SK-N-SH (cell line): ENCODE measurements at regions of chr18 and their contacts with region 1.

Region 1: GRCh38 chr18:623761-624620 is 27.2 kb downstream of the CLUL1 start:
- DNase-seq: peak; percentile 59
- H3K4me3 ChIP-seq: no peak overlapping the region; a peak in 1 of 4 replicates
- H3K27ac ChIP-seq: no peak overlapping the region
- H3K4me1 ChIP-seq: no peaks in the 10 kb centered on the region; a peak in 1 of 4 replicates
- H3K27me3 ChIP-seq: peaks cover 25% of the 10 kb centered on the region; the same call in 1 of the 2 replicates
- CTCF ChIP-seq: peak; percentile 67
- EP300 ChIP-seq: no peak
- RAD21 ChIP-seq: peak; percentile 72

Region 2: GRCh38 chr18:267688-268552 is 356.1 kb before region 1 on chr18 and contains the start of gene THOC1:
- CTCF ChIA-PET with region 1: interaction called, 10 read pairs
- POLR2A ChIA-PET with region 1: no interaction called
- DNase-seq: peak; percentile 90
- H3K4me3 ChIP-seq: peak within 1 kb of the TSS; percentile 81 to 97
- H3K27ac ChIP-seq: peak within 1 kb of the TSS; percentile 78 to 92
- H3K4me1 ChIP-seq: peaks cover 0 to 12% of the 10 kb centered on the region in 2 experiments; a peak in 2 of 4 replicates
- H3K27me3 ChIP-seq: no peaks in the 10 kb centered on the region
- CTCF ChIP-seq: no peak
- EP300 ChIP-seq: peak; percentile 23 to 36; a peak in 2 of 4 replicates
- RAD21 ChIP-seq: no peak
- polyA plus RNA-seq, gene THOC1: 12.3 and 14.4 TPM in 2 replicates

Region 3: GRCh38 chr18:389658-390357 is 234.2 kb before region 1 on chr18:
- CTCF ChIA-PET with region 1: no interaction called
- POLR2A ChIA-PET with region 1: no interaction called
- DNase-seq: no peak
- H3K4me3 ChIP-seq: no peak overlapping the region
- H3K27ac ChIP-seq: no peak overlapping the region
- H3K4me1 ChIP-seq: peaks cover 7 to 36% of the 10 kb centered on the region in 2 experiments; a peak in 3 of 4 replicates
- H3K27me3 ChIP-seq: no peaks in the 10 kb centered on the region
- CTCF ChIP-seq: peak; percentile 40
- EP300 ChIP-seq: no peak
- RAD21 ChIP-seq: no peak

Region 4: DNA sequence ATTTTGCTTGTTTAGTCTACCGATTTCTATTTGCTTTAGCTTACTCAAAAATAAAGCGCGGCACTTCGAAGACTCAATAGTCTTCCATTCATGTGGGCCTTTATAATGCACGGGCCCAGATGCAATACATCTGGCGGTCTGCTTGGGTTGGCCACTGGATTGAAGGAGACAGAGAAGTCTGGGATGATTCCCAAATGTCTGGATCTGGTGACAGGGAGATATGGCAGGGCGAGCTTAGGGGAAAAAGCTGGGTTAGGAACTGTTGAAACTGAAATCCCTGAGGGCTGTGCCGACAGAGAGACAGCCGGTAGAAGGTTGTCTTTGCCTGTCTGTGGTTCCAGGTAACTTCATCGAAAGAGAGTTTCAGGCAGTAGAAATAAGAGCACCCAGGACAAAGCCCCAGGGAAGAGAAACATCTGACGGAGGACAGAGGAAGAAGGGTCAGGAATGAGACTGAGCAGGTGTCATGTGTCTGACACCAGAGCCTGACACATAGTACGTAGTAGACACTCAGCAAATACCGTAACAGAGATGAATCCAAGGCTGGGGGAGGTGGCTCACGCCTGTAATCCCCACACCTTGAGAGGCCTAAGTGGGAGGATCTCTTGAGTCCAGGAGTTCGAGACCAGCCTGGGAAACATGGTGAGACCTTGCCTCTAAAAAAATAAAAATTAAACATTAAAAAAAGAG is 13.6 kb before region 1 on chr18:
- CTCF ChIA-PET with region 1: interaction called, 25 read pairs
- POLR2A ChIA-PET with region 1: no interaction called
- DNase-seq: no peak
- H3K4me3 ChIP-seq: no peak overlapping the region
- H3K27ac ChIP-seq: no peak overlapping the region
- H3K4me1 ChIP-seq: no peaks in the 10 kb centered on the region
- H3K27me3 ChIP-seq: no peaks in the 10 kb centered on the region; the same call in 1 of the 2 replicates
- CTCF ChIP-seq: no peak
- EP300 ChIP-seq: no peak
- RAD21 ChIP-seq: no peak

Region 5: DNA sequence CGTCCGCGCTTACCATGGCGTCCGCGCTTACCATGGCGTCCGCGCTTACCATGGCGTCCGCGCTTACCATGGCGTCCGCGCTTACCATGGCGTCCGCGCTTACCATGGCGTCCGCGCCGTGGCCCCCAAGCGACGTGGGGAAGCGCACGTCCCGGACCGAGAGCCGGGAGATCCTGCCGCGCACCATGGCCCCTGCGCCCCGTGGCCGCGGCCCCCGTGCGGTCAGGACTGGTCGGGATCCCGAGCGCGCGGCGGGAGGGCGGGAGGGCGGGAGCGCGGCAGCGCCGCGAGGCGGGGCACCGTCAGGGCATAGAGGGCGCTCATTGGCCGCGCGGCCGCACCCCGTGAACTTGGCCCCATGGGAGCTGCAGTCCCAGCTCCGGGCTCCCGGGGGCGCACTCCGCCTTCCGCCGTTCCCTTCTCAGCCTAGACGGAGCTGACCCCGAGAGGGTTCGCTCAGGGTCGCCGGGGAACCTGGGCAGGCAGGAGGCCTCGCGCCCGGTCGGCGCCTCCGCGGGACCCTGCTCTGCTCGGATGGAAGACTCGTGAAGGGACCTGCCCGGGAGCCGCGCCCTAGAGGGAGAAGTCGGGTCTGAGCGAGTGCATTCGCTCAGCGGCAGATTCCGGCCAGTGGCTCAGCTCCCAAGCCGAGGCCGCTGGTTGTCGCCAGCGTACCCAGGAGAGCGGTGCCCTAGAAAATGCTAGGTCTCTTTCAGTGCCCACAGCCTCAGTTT is 88.6 kb after region 1 on chr18 and contains the start of gene ENOSF1:
- CTCF ChIA-PET with region 1: interaction called, 12 read pairs
- POLR2A ChIA-PET with region 1: no interaction called
- DNase-seq: peak; percentile 92
- H3K4me3 ChIP-seq: peak within 1 kb of the TSS; percentile 67 to 68
- H3K27ac ChIP-seq: peak within 1 kb of the TSS in 1 of 2 experiments; percentile 47; a peak in 1 of 4 replicates
- H3K4me1 ChIP-seq: peaks cover 0 to 7% of the 10 kb centered on the region in 2 experiments; a peak in 1 of 4 replicates
- H3K27me3 ChIP-seq: no peaks in the 10 kb centered on the region
- CTCF ChIP-seq: peak; percentile 55
- EP300 ChIP-seq: no peak
- RAD21 ChIP-seq: no peak; the same call in 1 of the 2 replicates
- polyA plus RNA-seq, gene ENOSF1: 23.3 and 25.9 TPM in 2 replicates

Region 6: DNA sequence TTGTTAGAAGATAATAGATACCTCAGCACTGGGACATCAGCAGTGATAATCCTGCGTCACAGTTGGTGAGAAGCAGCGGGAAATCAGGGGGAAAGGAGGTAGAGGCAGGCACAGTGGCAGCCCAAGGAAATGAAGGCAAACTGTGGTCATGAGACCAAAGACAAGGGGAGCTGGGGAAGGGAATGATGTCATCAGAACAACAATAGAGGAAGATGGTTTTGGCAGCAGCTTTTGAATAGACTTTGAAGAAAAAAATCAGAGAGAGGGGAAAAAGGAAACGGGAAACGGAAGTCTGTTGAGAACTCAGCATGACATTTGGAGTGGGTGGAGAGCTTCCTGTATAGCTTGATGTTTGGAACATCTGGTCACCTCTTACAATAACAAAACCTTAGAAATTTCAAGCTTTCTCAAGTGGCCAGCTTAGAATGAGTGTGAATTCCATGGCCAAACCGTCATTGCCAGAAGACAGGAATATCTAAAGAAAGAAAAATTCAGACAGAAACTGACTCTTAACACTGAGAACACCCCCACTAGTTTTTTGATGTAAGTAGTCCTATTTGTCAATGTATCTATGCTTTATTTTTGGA is 206.4 kb after region 1 on chr18:
- CTCF ChIA-PET with region 1: interaction called, 149 read pairs
- POLR2A ChIA-PET with region 1: interaction called, 3 read pairs
- DNase-seq: no peak
- H3K4me3 ChIP-seq: no peak overlapping the region
- H3K27ac ChIP-seq: no peak overlapping the region
- H3K4me1 ChIP-seq: peaks cover 3 to 4% of the 10 kb centered on the region in 2 experiments; a peak in 2 of 4 replicates
- H3K27me3 ChIP-seq: peaks cover 5% of the 10 kb centered on the region; the same call in 1 of the 2 replicates
- CTCF ChIP-seq: no peak
- EP300 ChIP-seq: no peak
- RAD21 ChIP-seq: no peak